ENCODE measurements at regions of chr3 and their contacts with region 1.

Region 1: DNA sequence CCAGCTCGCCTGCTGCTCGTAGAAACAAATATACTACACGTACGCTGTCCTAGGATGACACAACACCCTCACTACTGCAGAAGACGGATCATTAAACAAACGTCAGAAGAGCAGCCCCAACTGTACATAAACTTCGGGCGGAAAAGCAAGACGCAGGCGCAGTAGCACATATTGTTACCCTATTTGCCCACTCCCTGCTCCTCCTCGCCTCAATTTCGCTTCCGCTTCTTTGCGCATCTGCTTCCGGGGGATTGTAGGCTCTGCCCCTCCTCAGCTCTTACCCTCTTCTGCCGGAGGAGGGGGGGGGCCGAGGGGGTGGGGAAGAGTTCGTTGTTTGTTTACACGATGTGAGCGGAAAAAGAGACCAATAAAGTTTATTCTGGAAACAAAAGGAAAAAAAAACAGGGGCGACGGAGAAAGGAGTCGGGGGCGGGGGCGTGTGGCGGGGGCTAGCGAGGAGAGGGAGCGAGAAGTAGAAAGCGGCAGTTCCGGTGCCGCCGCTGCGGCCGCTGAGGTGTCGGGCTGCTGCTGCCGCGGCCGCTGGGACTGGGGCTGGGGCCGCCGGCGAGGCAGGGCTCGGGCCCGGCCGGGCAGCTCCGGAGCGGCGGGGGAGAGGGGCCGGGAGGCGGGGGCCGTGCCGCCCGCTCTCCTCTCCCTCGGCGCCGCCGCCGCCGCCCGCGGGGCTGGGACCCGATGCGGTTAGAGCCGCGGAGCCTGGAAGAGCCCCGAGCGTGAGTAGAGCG is at the start of gene PIK3CA:
- DNase-seq: peak; percentile 99
- H3K4me3 ChIP-seq: peak within 1 kb of the TSS; percentile 73
- H3K27ac ChIP-seq: peak within 1 kb of the TSS; percentile 89
- H3K4me1 ChIP-seq: peaks cover 24% of the 10 kb centered on the region
- H3K27me3 ChIP-seq: no peaks in the 10 kb centered on the region
- CTCF ChIP-seq: no peak
- total RNA-seq, gene PIK3CA: 19.8 and 21.6 TPM in 2 replicates

Region 2: GRCh38 chr3:179015551-179016020 is 132.5 kb before region 1 on chr3:
- CTCF ChIA-PET with region 1: no interaction called
- POLR2A ChIA-PET with region 1: no interaction called
- intact Hi-C with region 1: loop called (anchors 1 kb)
- DNase-seq: peak; percentile 86
- H3K4me3 ChIP-seq: no peak overlapping the region
- H3K27ac ChIP-seq: no peak overlapping the region
- H3K4me1 ChIP-seq: peaks cover 29% of the 10 kb centered on the region
- H3K27me3 ChIP-seq: no peaks in the 10 kb centered on the region
- CTCF ChIP-seq: peak; percentile 87

Region 3: GRCh38 chr3:179071550-179072397 is 76.3 kb before region 1 on chr3 and contains the start of gene ZMAT3:
- CTCF ChIA-PET with region 1: no interaction called
- POLR2A ChIA-PET with region 1: no interaction called
- intact Hi-C with region 1: loop called (anchors 2 kb)
- DNase-seq: peak; percentile 87
- H3K4me3 ChIP-seq: peak within 1 kb of the TSS; percentile 89
- H3K27ac ChIP-seq: peak within 1 kb of the TSS; percentile 78
- H3K4me1 ChIP-seq: peaks cover 17% of the 10 kb centered on the region
- H3K27me3 ChIP-seq: no peaks in the 10 kb centered on the region
- CTCF ChIP-seq: no peak
- total RNA-seq, gene ZMAT3: 8.6 and 9.5 TPM in 2 replicates

Region 4: DNA sequence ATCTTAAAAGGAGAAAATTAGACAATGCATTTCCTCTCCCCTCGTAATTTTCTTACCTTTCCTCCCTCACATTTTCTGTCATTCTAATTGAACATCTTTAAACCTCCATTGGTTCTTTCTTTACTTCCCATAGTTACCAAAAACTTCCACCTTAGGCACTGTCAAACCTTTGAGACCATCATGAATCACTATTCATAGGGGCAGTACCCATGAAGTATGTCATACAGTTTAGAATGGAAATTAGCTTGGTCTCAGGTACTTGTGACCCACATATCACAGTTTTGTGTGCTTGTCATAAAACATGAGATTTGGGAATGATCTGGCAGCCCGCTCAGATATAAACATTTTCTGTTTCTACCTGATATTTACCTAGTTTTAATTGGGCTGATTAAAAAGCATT is 52.7 kb after region 1 on chr3:
- CTCF ChIA-PET with region 1: no interaction called
- POLR2A ChIA-PET with region 1: no interaction called
- intact Hi-C with region 1: no loop called
- DNase-seq: no peak
- H3K4me3 ChIP-seq: no peak overlapping the region
- H3K27ac ChIP-seq: no peak overlapping the region
- H3K4me1 ChIP-seq: no peaks in the 10 kb centered on the region
- H3K27me3 ChIP-seq: no peaks in the 10 kb centered on the region
- CTCF ChIP-seq: no peak

Region 5: DNA sequence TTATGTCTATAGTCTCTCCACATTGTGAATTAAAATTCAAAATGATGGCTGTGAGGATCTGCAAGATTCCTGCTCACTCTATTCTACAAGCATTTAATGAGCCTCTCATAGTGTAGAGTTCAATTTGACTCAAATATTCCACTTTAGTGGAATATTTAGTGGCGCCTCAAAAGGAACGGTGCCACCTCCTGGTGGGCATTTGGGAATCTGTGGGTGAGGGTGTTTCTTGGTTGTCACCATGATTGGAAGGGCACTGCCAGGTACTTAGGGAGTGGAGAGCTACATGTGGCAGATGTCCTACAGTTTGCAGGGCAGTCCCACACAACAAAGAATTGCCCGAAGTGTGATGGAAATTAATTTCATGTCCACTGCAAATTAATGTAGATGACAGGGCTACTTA is 124.3 kb after region 1 on chr3:
- CTCF ChIA-PET with region 1: interaction called, 5 read pairs
- POLR2A ChIA-PET with region 1: no interaction called
- intact Hi-C with region 1: loop called (anchors 5 kb)
- DNase-seq: peak; percentile 31
- H3K4me3 ChIP-seq: no peak overlapping the region
- H3K27ac ChIP-seq: no peak overlapping the region
- H3K4me1 ChIP-seq: no peaks in the 10 kb centered on the region
- H3K27me3 ChIP-seq: no peaks in the 10 kb centered on the region
- CTCF ChIP-seq: peak; percentile 61

Region 6: DNA sequence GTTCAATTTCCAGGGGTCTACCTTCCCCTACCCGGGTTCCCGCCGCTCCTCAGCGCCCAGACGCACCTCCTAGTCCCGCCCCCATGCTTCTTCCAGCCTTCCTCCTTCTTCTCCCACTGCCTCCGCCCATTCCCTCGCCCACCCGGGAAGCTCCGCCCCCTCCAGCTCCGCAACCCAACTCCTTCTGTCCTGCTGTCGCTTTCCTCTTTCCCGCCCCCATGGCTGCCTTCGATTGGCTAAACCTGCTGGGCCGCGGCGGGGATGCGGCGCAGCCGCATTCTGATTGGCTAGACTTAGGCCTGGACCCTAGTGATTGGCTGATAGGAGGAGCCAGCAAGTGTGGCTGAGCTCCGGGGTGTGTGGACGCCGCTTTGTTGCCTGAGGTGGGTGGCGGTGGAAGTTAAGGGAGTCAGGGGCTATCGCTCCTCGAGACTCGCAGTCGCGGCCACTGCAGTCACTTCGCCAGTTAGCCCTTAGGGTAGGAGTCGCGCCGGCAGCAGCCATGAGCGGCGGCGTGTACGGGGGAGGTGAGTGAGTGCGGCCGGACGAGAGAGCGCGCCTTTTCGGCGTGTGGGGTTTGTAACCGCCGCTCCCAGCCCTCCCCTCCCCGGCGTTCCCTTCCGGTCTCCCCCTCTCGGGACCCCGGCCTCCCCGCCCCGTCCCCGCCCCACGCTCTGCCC is 414.7 kb after region 1 on chr3 and contains the start of gene ACTL6A:
- CTCF ChIA-PET with region 1: no interaction called
- POLR2A ChIA-PET with region 1: interaction called, 4 read pairs
- intact Hi-C with region 1: loop called (anchors 2 kb)
- DNase-seq: peak; percentile 100
- H3K4me3 ChIP-seq: peak within 1 kb of the TSS; percentile 90
- H3K27ac ChIP-seq: peak within 1 kb of the TSS; percentile 93
- H3K4me1 ChIP-seq: peaks cover 14% of the 10 kb centered on the region
- H3K27me3 ChIP-seq: no peaks in the 10 kb centered on the region
- CTCF ChIP-seq: no peak
- total RNA-seq, gene ACTL6A: 140 and 153 TPM in 2 replicates

Region 7: GRCh38 chr3:179768080-179768479 is 620.0 kb after region 1 on chr3:
- CTCF ChIA-PET with region 1: no interaction called
- POLR2A ChIA-PET with region 1: interaction called, 10 read pairs
- intact Hi-C with region 1: no loop called
- DNase-seq: peak; percentile 94
- H3K4me3 ChIP-seq: no peak overlapping the region
- H3K27ac ChIP-seq: peak overlapping the region; percentile 70
- H3K4me1 ChIP-seq: peaks cover 84% of the 10 kb centered on the region
- H3K27me3 ChIP-seq: no peaks in the 10 kb centered on the region
- CTCF ChIP-seq: peak; percentile 81